ENCODE measurements at regions of chr10 and their contacts with region 1.

Region 1: GRCh38 chr10:116470768-116471415 is 43.2 kb downstream of the PNLIPRP3 start:
- DNase-seq: no peak
- ATAC-seq: peak; percentile 81; the same call in 1 of the 2 replicates
- H3K4me3 ChIP-seq: no peak overlapping the region
- H3K27ac ChIP-seq: no peak overlapping the region
- H3K4me1 ChIP-seq: no peaks in the 10 kb centered on the region
- H3K27me3 ChIP-seq: no peaks in the 10 kb centered on the region; the same call in none of the 2 replicates
- CTCF ChIP-seq: peak; percentile 80

Region 2: DNA sequence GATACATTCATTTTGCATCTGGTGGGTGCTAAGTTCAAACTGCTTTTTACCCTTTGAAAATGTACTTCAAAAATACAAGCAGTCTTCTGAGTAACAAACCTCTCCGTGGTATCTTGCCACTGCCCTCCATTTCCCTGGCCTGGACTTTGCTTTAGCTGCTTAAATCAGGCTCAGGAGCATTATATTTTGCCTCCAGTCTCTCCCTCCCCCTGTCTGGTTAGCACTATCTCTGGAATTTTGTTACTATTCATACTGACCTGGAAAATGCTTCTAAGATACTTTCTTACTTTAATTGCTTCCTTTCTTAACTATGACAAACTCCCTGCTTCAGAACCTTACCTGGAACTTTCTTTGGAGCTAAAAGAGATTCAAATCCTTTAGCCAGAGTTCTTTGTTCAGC is 567.7 kb before region 1 on chr10:
- CTCF ChIA-PET with region 1: no interaction called
- POLR2A ChIA-PET with region 1: no interaction called
- in situ Hi-C with region 1: no loop called
- intact Hi-C with region 1: no loop called
- DNase-seq: no peak
- ATAC-seq: no peak
- H3K4me3 ChIP-seq: no peak overlapping the region
- H3K27ac ChIP-seq: no peak overlapping the region
- H3K4me1 ChIP-seq: no peaks in the 10 kb centered on the region
- H3K27me3 ChIP-seq: no peaks in the 10 kb centered on the region
- CTCF ChIP-seq: no peak

Region 3: DNA sequence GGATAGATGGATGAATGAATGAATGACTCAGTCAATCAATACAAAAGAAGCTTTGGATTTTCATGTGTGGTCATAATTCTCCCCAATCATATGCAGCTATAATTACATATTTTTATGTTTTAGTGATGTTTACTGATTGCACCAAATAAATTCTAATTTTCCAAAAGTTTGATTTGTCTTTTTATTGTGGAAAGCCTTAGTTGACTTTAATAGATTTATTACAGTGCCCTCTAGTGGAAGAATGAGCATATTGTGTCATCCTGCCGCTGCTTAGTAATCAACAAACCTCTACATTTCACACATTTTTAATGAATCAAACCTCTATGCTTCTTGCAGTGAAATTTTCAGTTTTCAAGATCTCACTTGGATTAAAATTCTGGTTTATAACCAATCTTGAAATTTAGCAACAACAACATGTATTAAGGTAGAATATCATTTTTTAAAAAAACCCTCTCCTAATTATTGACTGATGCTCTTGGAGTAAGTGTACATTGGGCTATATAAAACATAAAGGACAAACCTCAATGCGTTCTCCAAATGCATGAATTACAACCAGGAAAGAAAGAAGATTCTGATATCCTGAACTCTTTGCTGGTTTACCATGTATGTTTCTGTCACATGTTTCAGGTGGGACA is 19.3 kb after region 1 on chr10:
- CTCF ChIA-PET with region 1: no interaction called
- POLR2A ChIA-PET with region 1: no interaction called
- in situ Hi-C with region 1: no loop called
- intact Hi-C with region 1: loop called (anchors 2 kb)
- DNase-seq: peak; percentile 15
- ATAC-seq: peak; percentile 80
- H3K4me3 ChIP-seq: no peak overlapping the region
- H3K27ac ChIP-seq: no peak overlapping the region
- H3K4me1 ChIP-seq: no peaks in the 10 kb centered on the region
- H3K27me3 ChIP-seq: peaks cover 13% of the 10 kb centered on the region
- CTCF ChIP-seq: peak; percentile 79; the same call in 1 of the 2 replicates

Region 4: GRCh38 chr10:117174439-117175214 is 703.7 kb after region 1 on chr10:
- CTCF ChIA-PET with region 1: no interaction called
- POLR2A ChIA-PET with region 1: no interaction called
- in situ Hi-C with region 1: no loop called
- intact Hi-C with region 1: loop called (anchors 10 kb)
- DNase-seq: peak; percentile 79
- ATAC-seq: peak; percentile 91
- H3K4me3 ChIP-seq: peak overlapping the region; percentile 48 to 75
- H3K27ac ChIP-seq: no peak overlapping the region
- H3K4me1 ChIP-seq: peaks cover 4% of the 10 kb centered on the region; the same call in 1 of the 2 replicates
- H3K27me3 ChIP-seq: peaks cover 33% of the 10 kb centered on the region
- CTCF ChIP-seq: peak; percentile 96